ENCODE measurements at regions of chr1 and their contacts with region 1.

Region 1: GRCh38 chr1:201170533-201171062 is 16.3 kb upstream of the TMEM9 start:
- DNase-seq: peak; percentile 21
- H3K4me3 ChIP-seq: peak overlapping the region; percentile 67
- CTCF ChIP-seq: no peak

Region 2: DNA sequence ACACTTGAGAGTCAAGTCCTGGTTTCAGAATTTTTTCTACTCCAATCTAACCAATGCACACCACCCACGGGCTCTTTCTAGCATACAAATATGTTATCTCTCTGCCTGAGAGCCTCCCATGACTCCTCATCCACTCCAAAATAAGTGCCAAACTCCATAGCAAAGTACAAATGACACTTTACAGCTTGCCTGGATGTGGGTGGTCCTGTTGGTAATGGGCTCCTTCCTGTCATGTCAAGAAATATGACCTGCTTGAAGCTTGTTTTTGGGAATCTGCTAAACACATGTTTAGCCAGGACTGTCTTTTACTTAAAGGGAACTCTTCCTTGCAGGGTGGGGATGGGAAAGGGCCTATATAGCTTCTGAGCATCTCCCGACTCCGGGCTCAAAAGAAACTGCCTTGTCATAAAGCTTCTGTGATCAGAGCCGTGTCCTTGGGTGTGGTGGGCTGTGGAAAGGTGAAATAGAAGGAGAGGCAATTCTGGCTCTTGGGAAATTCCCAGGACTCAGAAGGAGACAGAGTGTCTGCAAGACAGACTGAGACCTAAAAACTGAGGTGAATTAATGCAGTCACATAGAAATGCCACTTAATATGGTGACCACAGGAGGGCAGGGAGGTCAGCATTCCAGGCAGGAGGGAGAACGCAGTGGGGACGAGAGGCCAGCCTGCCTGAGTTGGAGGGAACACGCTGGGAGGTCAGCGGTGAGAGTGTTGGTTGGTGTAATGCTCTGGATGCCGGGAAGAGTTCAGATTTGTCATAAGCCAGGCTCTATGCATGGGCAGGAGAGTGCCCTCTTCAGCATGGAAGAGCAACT is 13.9 kb after region 1 on chr1:
- CTCF ChIA-PET with region 1: interaction called, 22 read pairs
- POLR2A ChIA-PET with region 1: no interaction called
- DNase-seq: peak; percentile 57
- H3K4me3 ChIP-seq: no peak overlapping the region
- CTCF ChIP-seq: peak; percentile 86

Region 3: GRCh38 chr1:201214461-201214860 is 43.9 kb after region 1 on chr1:
- CTCF ChIA-PET with region 1: no interaction called
- POLR2A ChIA-PET with region 1: no interaction called
- DNase-seq: no peak
- H3K4me3 ChIP-seq: no peak overlapping the region
- CTCF ChIP-seq: peak; percentile 7

Region 4: DNA sequence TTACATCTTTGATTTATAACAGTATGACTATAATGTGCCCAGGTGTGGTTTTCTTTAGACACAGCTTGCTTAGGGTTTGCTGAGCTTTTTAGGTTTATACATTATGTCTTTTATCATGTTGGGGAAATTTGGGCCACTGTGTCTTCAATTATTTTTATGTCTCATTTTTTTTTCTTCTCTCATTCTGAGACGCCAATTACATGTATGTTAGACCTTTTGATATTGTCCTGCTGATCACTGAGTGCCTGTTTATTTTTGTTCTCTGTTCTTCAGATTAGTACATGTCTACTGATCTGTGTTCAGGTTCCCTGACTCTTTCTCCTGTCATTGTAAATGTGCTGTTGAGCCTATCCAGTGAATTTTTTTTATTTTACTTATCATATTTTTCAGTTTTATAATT is 170.8 kb after region 1 on chr1:
- CTCF ChIA-PET with region 1: no interaction called
- POLR2A ChIA-PET with region 1: no interaction called
- DNase-seq: no peak
- H3K4me3 ChIP-seq: no peak overlapping the region
- CTCF ChIP-seq: no peak